ENCODE measurements at regions of chr10 and their contacts with region 1.

Region 1: GRCh38 chr10:22316285-22317120 is at the start of gene COMMD3:
- DNase-seq: peak; percentile 55 to 77
- H3K4me3 ChIP-seq: peak within 1 kb of the TSS; percentile 67
- H3K27ac ChIP-seq: peak within 1 kb of the TSS; percentile 58
- H3K4me1 ChIP-seq: peaks cover 29% of the 10 kb centered on the region
- H3K27me3 ChIP-seq: no peaks in the 10 kb centered on the region
- CTCF ChIP-seq: no peak
- total RNA-seq, gene COMMD3: 38.1 and 43.5 TPM in 2 replicates

Region 2: DNA sequence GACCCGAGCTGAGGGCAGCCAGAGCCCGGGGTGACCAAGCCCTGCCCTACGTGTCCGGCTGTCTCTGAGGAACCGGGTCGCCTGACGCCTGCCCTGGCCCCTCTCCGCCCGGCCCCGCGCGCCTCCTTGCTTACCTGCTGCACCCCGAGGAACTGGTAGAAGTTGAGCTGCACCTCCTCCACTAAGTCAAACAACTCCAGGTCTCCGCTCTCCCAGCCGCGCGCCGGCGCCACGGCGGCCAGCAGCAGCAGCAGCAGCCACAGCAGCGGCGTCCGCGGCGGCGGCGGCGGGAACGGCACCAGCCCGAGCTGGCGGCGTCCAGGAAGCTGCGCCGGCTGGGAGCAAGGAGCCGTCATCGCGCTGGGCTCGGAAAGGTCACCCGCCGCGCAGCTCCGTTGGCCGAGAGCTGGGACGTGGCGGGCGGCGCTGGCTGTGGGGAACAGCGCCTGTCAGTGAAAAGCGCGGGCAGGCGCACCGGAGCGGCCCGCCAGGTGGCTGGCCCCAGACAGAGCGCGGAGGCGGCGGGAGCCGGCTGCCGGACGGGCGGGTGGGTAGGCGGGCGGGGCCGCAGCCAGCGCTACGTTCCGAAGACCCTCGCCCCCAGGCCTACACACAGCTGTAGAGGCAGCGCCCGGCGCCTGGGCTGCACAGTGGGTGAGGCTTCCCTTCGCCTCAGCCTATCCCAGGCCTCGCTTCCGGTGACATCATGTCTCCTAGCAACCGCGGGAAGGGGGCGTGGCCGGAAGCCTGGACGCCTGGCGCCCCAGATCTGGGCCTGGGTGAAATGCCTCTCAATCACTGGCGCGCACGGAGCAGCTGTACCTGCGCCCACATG is 313.2 kb before region 1 on chr10 and contains the start of gene DNAJC1:
- CTCF ChIA-PET with region 1: no interaction called
- POLR2A ChIA-PET with region 1: interaction called, 5 read pairs
- intact Hi-C with region 1: loop called (anchors 2 kb)
- DNase-seq: peak; percentile 78 to 96
- H3K4me3 ChIP-seq: peak within 1 kb of the TSS; percentile 93
- H3K27ac ChIP-seq: peak within 1 kb of the TSS; percentile 48
- H3K4me1 ChIP-seq: peaks cover 13% of the 10 kb centered on the region
- H3K27me3 ChIP-seq: no peaks in the 10 kb centered on the region
- CTCF ChIP-seq: no peak
- total RNA-seq, gene DNAJC1: 10.8 and 19.1 TPM in 2 replicates

Region 3: DNA sequence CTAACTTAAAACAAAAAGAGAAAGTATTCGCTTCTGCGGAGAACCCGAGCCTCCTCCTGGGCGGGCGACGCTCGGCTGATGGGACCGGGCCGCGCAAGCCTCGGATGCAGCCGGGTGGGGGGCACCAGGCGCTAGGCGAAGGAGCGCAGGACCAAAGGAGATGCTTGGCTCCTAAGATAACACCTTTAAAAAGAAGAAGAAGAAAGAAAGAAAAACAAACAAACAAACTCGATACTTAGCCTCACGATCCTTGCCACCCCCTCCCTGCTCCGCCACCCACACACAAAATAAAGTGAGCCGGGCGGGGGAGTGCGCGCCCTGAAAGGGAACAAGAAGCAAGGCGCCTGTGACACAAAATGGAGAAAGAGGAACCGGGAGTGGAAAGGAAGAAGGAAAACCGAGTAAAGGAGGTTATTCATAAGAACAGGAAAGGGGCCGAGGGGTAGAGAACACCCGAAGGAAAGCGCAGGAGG is 64.7 kb before region 1 on chr10:
- CTCF ChIA-PET with region 1: no interaction called
- POLR2A ChIA-PET with region 1: no interaction called
- intact Hi-C with region 1: loop called (anchors 5 kb)
- DNase-seq: peak in 1 of 2 experiments; percentile 38
- H3K4me3 ChIP-seq: peak overlapping the region; percentile 60
- H3K27ac ChIP-seq: no peak overlapping the region
- H3K4me1 ChIP-seq: peaks cover 15% of the 10 kb centered on the region
- H3K27me3 ChIP-seq: no peaks in the 10 kb centered on the region
- CTCF ChIP-seq: no peak